PC-9 (cell line): ENCODE measurements at regions of chr19 and their contacts with region 1.

Region 1: GRCh38 chr19:40529093-40529954 is 47.3 kb upstream of the SHKBP1 start:
- DNase-seq: peak; percentile 65 to 87
- H3K4me3 ChIP-seq: peak overlapping the region; percentile 54
- H3K27ac ChIP-seq: no peak overlapping the region
- H3K4me1 ChIP-seq: no peaks in the 10 kb centered on the region
- H3K27me3 ChIP-seq: no peaks in the 10 kb centered on the region; the same call in 1 of the 2 replicates
- CTCF ChIP-seq: peak; percentile 96

Region 2: DNA sequence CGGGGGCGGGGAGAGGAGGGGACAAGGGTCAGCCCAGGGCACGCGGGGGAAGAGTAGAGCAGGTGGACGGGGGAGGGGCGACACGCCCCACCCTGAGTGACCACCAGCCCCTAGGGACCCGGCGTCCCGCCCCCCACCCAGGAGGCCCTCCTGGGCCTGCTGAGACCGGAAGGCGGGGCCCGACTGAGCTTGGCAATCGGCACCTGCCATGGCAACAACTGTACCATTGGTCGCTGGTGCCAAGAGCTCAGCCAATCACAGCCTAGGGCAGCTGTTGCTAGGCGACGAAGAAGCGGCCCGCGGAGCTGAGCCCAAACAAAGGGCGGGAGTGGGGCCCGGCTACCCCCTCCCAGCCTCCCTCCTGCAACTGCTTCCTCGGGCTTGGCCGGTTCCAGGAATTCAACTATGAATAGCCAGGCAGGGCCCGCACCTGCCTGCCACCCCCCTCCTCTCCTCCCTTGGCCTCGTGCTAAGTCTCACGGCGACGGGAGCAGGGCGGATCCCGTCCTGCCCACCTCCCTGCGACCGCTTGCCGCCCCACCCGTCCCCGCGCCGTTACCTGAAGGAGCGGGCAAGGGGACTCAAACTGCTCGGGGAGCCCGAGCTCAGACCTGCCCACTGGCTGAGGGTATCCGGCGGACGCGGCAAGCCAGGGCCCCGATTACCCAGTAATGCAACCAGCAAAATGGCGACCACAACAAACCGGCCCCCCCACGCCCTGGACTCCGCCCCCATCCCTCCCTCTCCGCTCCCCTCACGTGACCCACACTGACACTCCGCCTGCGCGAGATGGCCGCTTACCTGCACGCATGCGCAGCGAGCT is 695.6 kb before region 1 on chr19 and contains the start of gene DYRK1B:
- CTCF ChIA-PET with region 1: no interaction called
- POLR2A ChIA-PET with region 1: interaction called, 11 read pairs
- intact Hi-C with region 1: no loop called
- DNase-seq: peak in 1 of 2 experiments; percentile 95
- H3K4me3 ChIP-seq: no peak within 1 kb of the TSS
- H3K27ac ChIP-seq: no peak within 1 kb of the TSS
- H3K4me1 ChIP-seq: no peaks in the 10 kb centered on the region
- H3K27me3 ChIP-seq: no peaks in the 10 kb centered on the region
- CTCF ChIP-seq: no peak
- total RNA-seq, gene DYRK1B: 29.9 and 39.5 TPM in 2 replicates

Region 3: DNA sequence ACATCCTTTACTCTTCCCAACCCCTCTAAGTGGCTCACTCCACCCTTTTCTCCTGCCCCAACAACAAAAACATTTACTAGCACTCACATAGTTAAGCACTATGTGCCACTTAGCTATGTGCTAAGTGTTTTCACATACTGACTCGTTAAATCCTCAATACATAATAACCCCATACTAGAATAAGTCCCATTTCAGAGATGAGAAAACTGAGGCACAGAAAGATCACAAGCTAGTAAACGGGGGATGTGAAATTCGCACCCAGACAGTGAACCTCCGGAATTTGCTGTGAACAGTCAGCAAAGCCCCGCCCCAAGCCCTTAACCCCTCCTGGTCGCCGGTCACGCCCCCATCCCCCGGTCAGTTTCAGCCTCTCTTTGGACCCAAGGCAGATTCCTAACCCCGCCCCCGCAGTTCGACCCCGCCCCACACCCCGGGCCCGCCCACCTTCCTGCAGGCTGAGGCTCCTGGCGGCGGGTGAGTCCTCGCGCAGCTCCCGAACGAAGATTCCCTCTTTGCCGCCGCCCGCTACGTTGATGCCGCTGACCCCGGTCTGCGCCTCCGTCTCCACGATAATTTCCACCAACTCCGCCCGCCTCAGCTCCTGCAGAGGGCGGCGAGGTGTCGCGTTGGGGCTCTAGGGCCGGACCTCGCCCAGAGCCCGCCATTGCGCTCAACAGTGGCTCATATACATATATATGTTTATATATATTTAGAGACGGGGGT is 125.9 kb before region 1 on chr19:
- CTCF ChIA-PET with region 1: no interaction called
- POLR2A ChIA-PET with region 1: no interaction called
- intact Hi-C with region 1: loop called (anchors 10 kb)
- DNase-seq: peak; percentile 69 to 96
- H3K4me3 ChIP-seq: peak overlapping the region; percentile 90
- H3K27ac ChIP-seq: 0 out of 2 replicates have a peak overlapping the region, but pooled peaks have one; percentile 23
- H3K4me1 ChIP-seq: peaks cover 4% of the 10 kb centered on the region
- H3K27me3 ChIP-seq: no peaks in the 10 kb centered on the region
- CTCF ChIP-seq: no peak

Region 4: GRCh38 chr19:40489882-40490230 is 39.5 kb before region 1 on chr19:
- CTCF ChIA-PET with region 1: interaction called, 10 read pairs
- POLR2A ChIA-PET with region 1: no interaction called
- intact Hi-C with region 1: no loop called
- DNase-seq: no peak
- H3K4me3 ChIP-seq: no peak overlapping the region
- H3K27ac ChIP-seq: no peak overlapping the region
- H3K4me1 ChIP-seq: no peaks in the 10 kb centered on the region
- H3K27me3 ChIP-seq: peaks cover 10% of the 10 kb centered on the region
- CTCF ChIP-seq: no peak

Region 5: GRCh38 chr19:40822161-40822560 is 292.8 kb after region 1 on chr19:
- CTCF ChIA-PET with region 1: interaction called, 13 read pairs
- POLR2A ChIA-PET with region 1: no interaction called
- intact Hi-C with region 1: no loop called
- DNase-seq: no peak
- H3K4me3 ChIP-seq: no peak overlapping the region
- H3K27ac ChIP-seq: no peak overlapping the region
- H3K4me1 ChIP-seq: 0 out of 2 replicates have a peak, but pooled peaks cover 5% of the 10 kb centered on the region
- H3K27me3 ChIP-seq: no peaks in the 10 kb centered on the region
- CTCF ChIP-seq: no peak